PC-9 (cell line): ENCODE measurements at regions of chr12 and their contacts with region 1.

Region 1: DNA sequence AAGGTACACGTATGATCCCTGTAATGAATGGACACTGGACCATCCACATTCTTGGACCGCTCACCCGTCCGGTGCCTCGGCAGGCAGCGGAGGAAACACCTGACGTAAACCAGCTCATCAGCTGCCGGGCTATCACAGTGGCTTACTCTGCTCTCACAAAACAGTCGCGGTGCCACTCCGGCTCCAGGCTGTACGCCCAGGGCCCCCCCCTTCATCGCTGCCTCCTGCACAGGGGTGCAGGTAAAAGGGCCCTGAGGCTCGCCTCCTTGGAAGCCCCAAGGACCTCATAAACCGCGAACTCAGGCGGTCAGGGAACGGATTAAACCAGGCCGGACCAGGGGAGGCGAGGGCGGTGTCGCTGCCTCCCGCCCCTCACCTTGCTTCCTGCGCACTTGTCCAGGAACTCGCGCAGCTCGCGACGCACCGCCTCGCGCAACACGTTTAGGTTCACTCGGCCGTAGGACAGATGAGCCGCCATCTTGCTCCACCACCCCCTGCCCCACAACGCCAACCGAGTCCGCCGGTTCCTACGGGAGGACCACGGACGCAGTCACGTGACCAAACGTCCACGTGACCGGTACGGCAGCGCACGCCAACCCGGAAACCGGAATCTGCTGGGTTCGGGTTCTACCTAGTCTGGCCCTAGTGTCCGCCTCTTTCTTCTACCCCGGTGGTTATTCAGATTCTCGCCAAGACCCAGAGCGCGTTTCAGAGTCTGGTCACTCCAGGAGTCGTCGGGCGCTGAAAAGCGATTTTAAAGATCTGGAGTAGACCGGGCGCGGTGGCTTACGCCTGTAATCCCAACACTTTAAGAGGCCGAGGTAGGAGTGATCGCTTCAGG is at the start of gene VPS33A:
- DNase-seq: peak; percentile 91 to 95
- H3K4me3 ChIP-seq: peak within 1 kb of the TSS; percentile 93
- H3K27ac ChIP-seq: peak within 1 kb of the TSS; percentile 80
- H3K4me1 ChIP-seq: peaks cover 3% of the 10 kb centered on the region; the same call in 1 of the 2 replicates
- H3K27me3 ChIP-seq: no peaks in the 10 kb centered on the region
- CTCF ChIP-seq: no peak
- total RNA-seq, gene VPS33A: 18.1 and 20.2 TPM in 2 replicates

Region 2: GRCh38 chr12:121858662-121859572 is 407.2 kb before region 1 on chr12 and contains the start of gene HPD:
- CTCF ChIA-PET with region 1: no interaction called
- POLR2A ChIA-PET with region 1: interaction called, 12 read pairs
- intact Hi-C with region 1: no loop called
- DNase-seq: peak; percentile 40 to 55
- H3K4me3 ChIP-seq: no peak within 1 kb of the TSS
- H3K27ac ChIP-seq: no peak within 1 kb of the TSS
- H3K4me1 ChIP-seq: no peaks in the 10 kb centered on the region
- H3K27me3 ChIP-seq: no peaks in the 10 kb centered on the region
- CTCF ChIP-seq: no peak
- total RNA-seq, gene HPD: 0.35 and 0.92 TPM in 2 replicates

Region 3: GRCh38 chr12:122130150-122130549 is 136.0 kb before region 1 on chr12:
- CTCF ChIA-PET with region 1: no interaction called
- POLR2A ChIA-PET with region 1: no interaction called
- intact Hi-C with region 1: loop called (anchors 2 kb)
- DNase-seq: peak; percentile 72 to 74
- H3K4me3 ChIP-seq: no peak overlapping the region
- H3K27ac ChIP-seq: peak overlapping the region; percentile 40; the same call in 1 of the 2 replicates
- H3K4me1 ChIP-seq: peaks cover 14% of the 10 kb centered on the region
- H3K27me3 ChIP-seq: no peaks in the 10 kb centered on the region
- CTCF ChIP-seq: no peak

Region 4: GRCh38 chr12:122235741-122236140 is 30.4 kb before region 1 on chr12:
- CTCF ChIA-PET with region 1: no interaction called
- POLR2A ChIA-PET with region 1: no interaction called
- intact Hi-C with region 1: no loop called
- DNase-seq: no peak
- H3K4me3 ChIP-seq: no peak overlapping the region
- H3K27ac ChIP-seq: no peak overlapping the region
- H3K4me1 ChIP-seq: no peaks in the 10 kb centered on the region
- H3K27me3 ChIP-seq: no peaks in the 10 kb centered on the region
- CTCF ChIP-seq: no peak

Region 5: DNA sequence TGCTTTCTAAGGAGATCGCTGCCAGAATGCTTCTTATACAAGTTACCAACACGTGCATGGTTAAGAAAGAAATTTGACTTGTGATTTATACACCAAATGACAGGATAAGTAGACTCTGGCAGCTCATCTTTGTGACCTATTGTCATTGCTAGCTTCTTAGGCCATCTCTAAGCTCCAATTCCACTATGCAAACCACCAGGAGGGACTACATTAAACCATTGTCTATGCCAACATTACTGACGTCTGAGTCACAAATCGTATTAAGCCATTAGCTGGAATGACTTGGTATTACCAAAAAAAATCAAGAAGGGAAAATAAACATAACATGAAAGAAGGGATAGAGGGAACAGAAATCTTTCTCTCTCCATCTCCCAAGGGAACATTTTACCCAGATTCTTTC is 15.9 kb after region 1 on chr12:
- CTCF ChIA-PET with region 1: no interaction called
- POLR2A ChIA-PET with region 1: interaction called, 13 read pairs
- intact Hi-C with region 1: no loop called
- DNase-seq: no peak
- H3K4me3 ChIP-seq: no peak overlapping the region
- H3K27ac ChIP-seq: no peak overlapping the region
- H3K4me1 ChIP-seq: no peaks in the 10 kb centered on the region
- H3K27me3 ChIP-seq: no peaks in the 10 kb centered on the region
- CTCF ChIP-seq: no peak